Panc1 (cell line): ENCODE measurements at regions of chr2 and their contacts with region 1.

Region 1: DNA sequence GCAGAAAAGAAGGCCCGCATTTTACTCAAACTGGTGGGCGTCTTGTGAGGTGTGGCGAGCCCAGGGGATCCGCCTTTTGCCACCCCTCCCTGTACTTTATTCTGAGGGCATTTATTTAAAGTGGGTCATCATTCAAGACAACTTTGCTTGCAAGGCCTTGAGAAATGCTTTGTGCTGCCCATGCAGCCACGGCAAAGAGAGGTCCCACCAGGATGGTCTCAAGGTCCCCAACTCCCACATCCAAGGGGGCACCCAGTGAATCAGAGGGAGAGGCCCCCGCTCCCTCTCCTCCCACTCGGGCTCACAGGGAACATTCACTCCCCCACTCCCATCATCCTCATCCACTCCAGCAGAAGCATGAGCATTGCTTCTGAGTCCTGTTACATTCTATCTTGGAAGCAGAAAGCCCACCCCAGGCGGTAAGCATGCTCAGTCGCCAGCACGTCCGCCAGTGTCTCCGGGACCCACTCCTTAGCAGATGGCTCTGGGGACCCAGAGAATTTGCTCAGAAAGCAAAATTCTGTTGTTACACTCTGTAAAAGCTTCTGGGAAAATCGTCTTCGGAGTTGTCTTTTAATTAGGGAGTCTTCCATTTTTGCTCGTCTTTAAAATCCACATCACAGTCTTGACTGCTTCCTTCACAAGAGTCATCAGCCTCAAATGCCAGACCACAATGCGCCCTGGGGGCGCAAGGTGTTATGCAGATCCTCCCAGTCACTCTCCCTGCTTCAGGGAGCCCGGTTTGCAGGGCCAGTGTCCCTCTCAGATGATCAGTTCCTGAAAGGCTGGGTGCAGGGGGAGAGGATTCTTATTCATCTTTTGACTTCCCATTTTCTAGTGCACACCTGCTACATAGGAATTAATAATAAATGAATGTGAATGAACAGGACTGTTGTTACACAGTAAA is 99.4 kb upstream of the NCK2 start:
- DNase-seq: no peak
- ATAC-seq: no peak
- H3K4me3 ChIP-seq: no peak overlapping the region
- H3K27ac ChIP-seq: no peak overlapping the region
- H3K4me1 ChIP-seq: peaks cover 6% of the 10 kb centered on the region
- H3K27me3 ChIP-seq: no peaks in the 10 kb centered on the region
- CTCF ChIP-seq: no peak

Region 2: DNA sequence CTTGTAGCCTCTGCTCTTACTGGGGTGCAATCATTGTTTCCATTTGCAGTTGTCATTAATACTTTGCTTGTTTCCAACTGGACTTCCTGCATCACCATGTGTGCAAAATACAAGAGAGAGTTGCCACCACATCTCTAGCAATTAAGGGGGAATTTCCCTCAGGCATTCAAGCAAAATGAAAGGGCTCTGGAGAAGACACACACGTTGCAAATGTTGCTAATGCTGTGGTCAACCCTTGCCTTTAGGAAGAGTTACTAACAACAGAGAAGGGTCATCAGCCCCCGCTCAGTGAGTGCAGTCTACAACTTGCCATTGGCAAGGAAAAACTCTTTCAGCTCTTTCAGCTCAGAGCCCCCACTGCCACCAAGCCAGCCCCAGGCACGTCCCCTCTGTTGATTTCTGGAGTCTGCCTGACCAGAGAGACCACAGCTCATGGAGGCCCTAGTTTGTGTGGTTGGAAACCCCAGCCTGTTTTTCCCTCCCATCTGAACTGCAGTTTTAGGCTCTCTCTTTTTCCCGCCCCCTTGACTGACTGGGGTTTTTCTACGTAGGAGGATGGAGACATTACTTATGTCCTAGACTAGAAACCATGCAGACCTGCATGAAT is 429.6 kb before region 1 on chr2:
- CTCF ChIA-PET with region 1: no interaction called
- POLR2A ChIA-PET with region 1: no interaction called
- in situ Hi-C with region 1: no loop called
- intact Hi-C with region 1: no loop called
- DNase-seq: no peak
- ATAC-seq: no peak
- H3K4me3 ChIP-seq: no peak overlapping the region
- H3K27ac ChIP-seq: no peak overlapping the region
- H3K4me1 ChIP-seq: no peaks in the 10 kb centered on the region
- H3K27me3 ChIP-seq: no peaks in the 10 kb centered on the region; the same call in 1 of the 2 replicates
- CTCF ChIP-seq: no peak

Region 3: DNA sequence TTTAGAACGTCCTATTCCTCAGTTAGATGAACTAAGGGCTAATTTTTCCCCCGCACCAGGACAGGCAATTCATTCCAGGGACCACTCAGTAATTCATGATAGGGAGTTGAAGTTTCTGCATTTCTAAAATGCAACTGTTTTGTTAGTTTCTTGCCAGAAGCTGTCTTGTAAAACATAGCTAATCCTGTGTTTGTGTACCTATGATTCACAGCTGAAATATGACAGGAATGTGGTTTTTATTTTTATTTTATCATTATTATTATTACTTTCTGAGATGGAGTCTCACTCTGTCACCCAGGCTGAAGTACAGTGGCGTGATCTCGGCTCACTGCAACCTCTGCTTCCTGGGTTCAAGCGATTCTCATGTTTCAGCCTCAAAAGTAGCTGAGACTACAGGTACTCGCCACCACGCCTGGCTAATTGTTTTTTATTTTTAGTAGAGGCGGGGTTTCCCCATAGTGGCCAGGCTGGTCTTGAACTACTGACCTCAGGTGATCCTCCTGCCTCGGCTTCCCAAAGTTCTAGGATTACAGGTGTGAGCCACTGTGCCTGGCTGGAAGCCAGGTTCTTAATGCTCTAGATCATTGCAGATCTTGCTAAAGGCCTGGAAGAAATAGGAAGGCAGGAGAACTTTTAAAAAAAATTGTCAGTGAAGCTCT is 91.6 kb before region 1 on chr2:
- CTCF ChIA-PET with region 1: no interaction called
- POLR2A ChIA-PET with region 1: interaction called, 10 read pairs
- in situ Hi-C with region 1: no loop called
- intact Hi-C with region 1: no loop called
- DNase-seq: no peak
- ATAC-seq: peak; percentile 64; the same call in 1 of the 2 replicates
- H3K4me3 ChIP-seq: no peak overlapping the region
- H3K27ac ChIP-seq: 0 out of 2 replicates have a peak overlapping the region, but pooled peaks have one; percentile 46
- H3K4me1 ChIP-seq: peaks cover 16% of the 10 kb centered on the region
- H3K27me3 ChIP-seq: 0 out of 2 replicates have a peak, but pooled peaks cover 2% of the 10 kb centered on the region
- CTCF ChIP-seq: no peak